Endothelial cell of umbilical vein (primary cell): ENCODE measurements at regions of chr1 and their contacts with region 1.

Region 1: DNA sequence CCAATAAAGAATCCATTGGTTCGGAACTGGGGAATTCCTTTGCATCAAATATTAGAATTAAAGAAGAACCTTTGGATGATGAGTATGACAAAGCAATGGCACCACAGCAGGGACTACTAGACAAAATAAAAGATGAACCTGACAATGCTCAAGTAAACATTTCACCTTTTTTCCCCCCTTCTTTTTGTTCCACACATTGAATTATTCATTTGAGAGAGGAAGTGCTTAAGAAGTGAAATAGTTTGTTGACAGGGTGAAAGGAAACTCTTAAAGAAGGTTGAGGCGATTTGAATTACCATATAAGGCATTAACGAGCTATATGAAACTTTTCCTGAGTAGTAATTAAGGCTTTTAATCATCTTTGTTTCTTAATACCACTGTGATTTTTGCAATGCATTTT is 93.1 kb downstream of the ZMYM4 start:
- DNase-seq: peak; percentile 31
- H3K4me3 ChIP-seq: no peak overlapping the region
- H3K27ac ChIP-seq: peak overlapping the region; percentile 7
- H3K4me1 ChIP-seq: peaks cover 8% of the 10 kb centered on the region
- H3K27me3 ChIP-seq: no peaks in the 10 kb centered on the region
- CTCF ChIP-seq: no peak
- POLR2A ChIP-seq: no peak

Region 2: GRCh38 chr1:35407743-35408142 is 46.1 kb after region 1 on chr1:
- CTCF ChIA-PET with region 1: no interaction called
- POLR2A ChIA-PET with region 1: no interaction called
- dilution Hi-C with region 1: no loop called
- intact Hi-C with region 1: loop called (anchors 2 kb)
- DNase-seq: no peak
- H3K4me3 ChIP-seq: no peak overlapping the region
- H3K27ac ChIP-seq: no peak overlapping the region
- H3K4me1 ChIP-seq: no peaks in the 10 kb centered on the region
- H3K27me3 ChIP-seq: no peaks in the 10 kb centered on the region
- CTCF ChIP-seq: no peak
- POLR2A ChIP-seq: no peak